ENCODE measurements at regions of chrX and their contacts with region 1.

Region 1: GRCh38 chrX:149539283-149540130 is 1.3 kb upstream of the EOLA1 start:
- DNase-seq: peak; percentile 88
- H3K4me3 ChIP-seq: peak overlapping the region; percentile 73
- H3K27ac ChIP-seq: peak overlapping the region; percentile 53
- H3K4me1 ChIP-seq: peaks cover 9% of the 10 kb centered on the region
- CTCF ChIP-seq: no peak

Region 2: DNA sequence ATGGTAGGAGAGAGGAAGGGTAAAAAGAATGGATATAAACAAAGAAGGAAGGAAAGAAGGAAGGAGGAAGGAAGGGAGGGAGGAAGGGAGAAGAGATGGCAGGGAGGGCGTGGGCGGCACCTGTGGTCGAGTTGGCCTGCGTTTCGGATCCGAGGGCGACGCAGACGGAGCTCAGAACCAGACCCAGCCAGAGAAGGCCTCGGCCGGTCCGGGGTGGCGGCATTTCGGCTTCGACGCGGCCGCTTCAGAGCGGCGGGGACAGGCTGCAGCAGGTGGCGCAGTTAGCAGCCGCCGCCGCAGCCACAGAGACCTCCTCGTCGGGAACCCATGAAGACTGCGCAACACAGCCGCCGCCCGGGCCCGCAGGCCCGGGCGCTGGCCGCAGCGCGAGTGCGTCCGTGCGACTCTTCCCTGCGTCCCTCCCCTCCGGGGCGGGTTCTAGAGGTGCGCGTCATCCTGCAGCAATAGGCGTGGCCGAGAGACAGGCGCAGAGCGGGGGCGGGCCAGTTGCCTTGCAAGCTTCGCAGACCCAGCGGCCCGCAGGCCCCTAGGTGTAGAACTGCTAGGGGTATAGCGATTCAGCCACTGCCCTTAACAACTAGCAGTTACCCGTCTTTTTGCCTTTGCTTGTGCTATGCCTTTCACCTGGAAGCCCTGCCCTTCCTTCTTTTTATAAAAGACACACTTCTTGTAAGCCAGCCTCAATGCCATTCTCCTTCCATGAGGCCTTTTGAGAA is 34.4 kb before region 1 on chrX and contains the start of gene IDS:
- CTCF ChIA-PET with region 1: interaction called, 3 read pairs
- POLR2A ChIA-PET with region 1: interaction called, 16 read pairs
- intact Hi-C with region 1: loop called (anchors 2 kb)
- DNase-seq: peak; percentile 90
- H3K4me3 ChIP-seq: peak within 1 kb of the TSS; percentile 89
- H3K27ac ChIP-seq: peak within 1 kb of the TSS; percentile 76
- H3K4me1 ChIP-seq: peaks cover 28% of the 10 kb centered on the region
- CTCF ChIP-seq: no peak
- total RNA-seq, gene IDS: 25.6 and 44.0 TPM in 2 replicates

Region 3: GRCh38 chrX:149528381-149528780 is 11.1 kb before region 1 on chrX:
- CTCF ChIA-PET with region 1: interaction called, 3 read pairs
- POLR2A ChIA-PET with region 1: interaction called, 10 read pairs
- intact Hi-C with region 1: no loop called
- DNase-seq: no peak
- H3K4me3 ChIP-seq: no peak overlapping the region
- H3K27ac ChIP-seq: no peak overlapping the region
- H3K4me1 ChIP-seq: peaks cover 38% of the 10 kb centered on the region
- CTCF ChIP-seq: no peak

Region 4: GRCh38 chrX:149631234-149632165 is 92.0 kb after region 1 on chrX and contains the start of gene TMEM185A:
- CTCF ChIA-PET with region 1: no interaction called
- POLR2A ChIA-PET with region 1: no interaction called
- intact Hi-C with region 1: no loop called
- DNase-seq: peak; percentile 75
- H3K4me3 ChIP-seq: peak within 1 kb of the TSS; percentile 75
- H3K27ac ChIP-seq: no peak within 1 kb of the TSS
- H3K4me1 ChIP-seq: peaks cover 19% of the 10 kb centered on the region
- CTCF ChIP-seq: no peak
- total RNA-seq, gene TMEM185A: 5.8 and 6.2 TPM in 2 replicates

Region 5: DNA sequence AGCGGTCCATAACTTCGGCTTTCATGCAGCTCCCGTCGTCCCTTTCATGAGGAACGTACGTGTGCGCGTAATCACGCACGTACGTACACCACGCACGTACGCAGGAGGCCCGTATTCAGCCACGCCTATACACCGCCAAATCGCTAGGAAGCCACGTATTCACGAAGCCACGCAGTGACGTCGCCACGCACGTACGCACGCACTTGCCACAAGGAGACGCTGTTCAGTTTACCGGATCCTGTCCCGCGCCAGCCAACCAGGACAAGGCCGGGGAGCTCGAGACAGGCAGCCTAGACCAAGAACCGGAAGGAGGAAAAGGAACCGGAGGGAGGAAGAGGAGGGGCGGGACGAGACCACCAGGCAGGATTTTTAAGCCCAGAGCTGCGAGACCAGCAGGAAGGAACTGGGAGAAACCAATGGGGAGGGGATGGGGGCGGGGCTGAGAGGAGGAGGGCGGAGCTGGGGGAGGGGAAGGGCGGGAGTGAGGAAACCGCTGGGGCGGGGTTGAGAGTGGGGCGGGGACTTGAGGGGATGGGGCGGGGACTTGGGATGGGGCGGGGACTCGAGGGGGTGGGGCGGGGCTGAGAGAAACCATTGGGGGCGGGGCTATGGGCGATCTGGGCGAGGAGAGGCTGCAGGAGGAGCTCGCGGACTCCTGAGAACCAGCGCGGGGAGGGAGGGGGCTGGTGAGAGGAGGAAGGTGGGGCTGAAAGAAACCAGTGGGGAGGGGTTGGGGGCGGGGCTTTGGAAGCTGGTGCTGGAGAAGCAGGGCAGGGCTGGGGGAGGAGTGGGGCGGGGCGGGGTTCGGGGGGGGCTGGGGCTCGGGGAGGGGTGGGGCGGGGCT is 399.1 kb after region 1 on chrX and contains the start of gene EOLA2:
- CTCF ChIA-PET with region 1: interaction called, 11 read pairs
- POLR2A ChIA-PET with region 1: interaction called, 27 read pairs
- intact Hi-C with region 1: no loop called
- DNase-seq: peak; percentile 96
- H3K4me3 ChIP-seq: peak within 1 kb of the TSS; percentile 96
- H3K27ac ChIP-seq: peak within 1 kb of the TSS; percentile 80
- H3K4me1 ChIP-seq: no peaks in the 10 kb centered on the region
- CTCF ChIP-seq: peak; percentile 46; the same call in 1 of the 2 replicates
- total RNA-seq, gene EOLA2: 20.0 and 21.5 TPM in 2 replicates